ENCODE measurements at regions of chr16 and their contacts with region 1.

Region 1: GRCh38 chr16:57519796-57520360 is 16.5 kb downstream of the CCDC102A start:
- DNase-seq: peak; percentile 59
- H3K4me3 ChIP-seq: no peak overlapping the region
- H3K27ac ChIP-seq: no peak overlapping the region
- H3K4me1 ChIP-seq: peaks cover 3% of the 10 kb centered on the region
- H3K27me3 ChIP-seq: no peaks in the 10 kb centered on the region
- CTCF ChIP-seq: peak; percentile 97 to 98
- POLR2A ChIP-seq: no peak

Region 2: GRCh38 chr16:57422026-57422944 is 97.6 kb before region 1 on chr16:
- CTCF ChIA-PET with region 1: interaction called, 77 read pairs
- POLR2A ChIA-PET with region 1: no interaction called
- dilution Hi-C with region 1: no loop called
- intact Hi-C with region 1: loop called (anchors 1 kb)
- DNase-seq: peak; percentile 67
- H3K4me3 ChIP-seq: no peak overlapping the region
- H3K27ac ChIP-seq: no peak overlapping the region
- H3K4me1 ChIP-seq: peaks cover 5% of the 10 kb centered on the region
- H3K27me3 ChIP-seq: no peaks in the 10 kb centered on the region
- CTCF ChIP-seq: peak; percentile 68 to 72
- POLR2A ChIP-seq: no peak

Region 3: GRCh38 chr16:57462209-57462977 is 57.5 kb before region 1 on chr16 and contains the start of gene POLR2C:
- CTCF ChIA-PET with region 1: interaction called, 40 read pairs
- POLR2A ChIA-PET with region 1: no interaction called
- dilution Hi-C with region 1: no loop called
- intact Hi-C with region 1: loop called (anchors 1 kb)
- DNase-seq: peak; percentile 87
- H3K4me3 ChIP-seq: peak within 1 kb of the TSS; percentile 59 to 85 (median 79)
- H3K27ac ChIP-seq: peak within 1 kb of the TSS; percentile 38
- H3K4me1 ChIP-seq: peaks cover 6% of the 10 kb centered on the region
- H3K27me3 ChIP-seq: no peaks in the 10 kb centered on the region
- CTCF ChIP-seq: peak; percentile 95 to 96
- POLR2A ChIP-seq: peak; percentile 99
- total RNA-seq, gene POLR2C: 60.2 and 65.2 TPM in 2 replicates

Region 4: GRCh38 chr16:57475711-57476339 is 44.1 kb before region 1 on chr16:
- CTCF ChIA-PET with region 1: interaction called, 24 read pairs
- POLR2A ChIA-PET with region 1: no interaction called
- dilution Hi-C with region 1: no loop called
- intact Hi-C with region 1: loop called (anchors 1 kb)
- DNase-seq: peak; percentile 56
- H3K4me3 ChIP-seq: no peak overlapping the region
- H3K27ac ChIP-seq: no peak overlapping the region
- H3K4me1 ChIP-seq: peaks cover 28% of the 10 kb centered on the region
- H3K27me3 ChIP-seq: no peaks in the 10 kb centered on the region
- CTCF ChIP-seq: peak; percentile 79 to 84
- POLR2A ChIP-seq: no peak

Region 5: GRCh38 chr16:57507136-57508034 is 12.5 kb before region 1 on chr16:
- CTCF ChIA-PET with region 1: interaction called, 13 read pairs
- POLR2A ChIA-PET with region 1: no interaction called
- dilution Hi-C with region 1: no loop called
- intact Hi-C with region 1: no loop called
- DNase-seq: no peak
- H3K4me3 ChIP-seq: no peak overlapping the region
- H3K27ac ChIP-seq: no peak overlapping the region
- H3K4me1 ChIP-seq: no peaks in the 10 kb centered on the region
- H3K27me3 ChIP-seq: peaks cover 0 to 6% of the 10 kb centered on the region in 2 experiments
- CTCF ChIP-seq: no peak
- POLR2A ChIP-seq: no peak

Region 6: DNA sequence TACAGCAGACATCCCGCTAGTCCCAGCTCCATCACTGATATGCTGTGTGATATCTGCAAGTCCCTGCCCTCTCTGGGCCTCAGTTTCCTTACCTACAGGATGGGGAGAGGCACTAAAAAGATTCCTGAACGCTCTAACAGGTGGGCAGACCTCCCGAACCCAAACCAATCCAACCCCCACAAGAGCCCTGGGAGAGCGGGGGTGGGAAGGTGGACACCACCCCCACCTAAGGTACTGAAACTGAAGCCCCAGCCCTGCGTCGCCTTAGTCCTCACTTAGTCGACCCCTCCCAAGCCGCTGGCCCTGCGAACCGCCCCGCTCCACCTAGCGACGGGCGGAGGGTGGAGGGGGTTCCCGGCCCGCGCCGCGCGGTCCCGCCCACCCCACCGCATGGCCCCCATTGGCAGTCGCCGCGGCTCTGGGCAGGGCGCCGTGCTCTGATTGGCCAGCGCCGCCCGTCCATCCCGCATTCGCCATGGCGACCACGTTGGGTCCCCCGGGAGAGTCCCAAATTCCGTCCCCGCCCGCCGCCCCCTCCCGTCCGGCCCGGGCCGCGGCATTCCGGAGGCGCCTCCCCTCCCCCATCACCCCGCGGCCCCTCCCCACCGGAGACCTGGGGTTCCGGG is 15.9 kb after region 1 on chr16:
- CTCF ChIA-PET with region 1: interaction called, 10 read pairs
- POLR2A ChIA-PET with region 1: no interaction called
- dilution Hi-C with region 1: no loop called
- intact Hi-C with region 1: loop called (anchors 1 kb)
- DNase-seq: peak; percentile 87
- H3K4me3 ChIP-seq: peak overlapping the region; percentile 80 to 82 (median 80)
- H3K27ac ChIP-seq: peak overlapping the region; percentile 18
- H3K4me1 ChIP-seq: peaks cover 25% of the 10 kb centered on the region
- H3K27me3 ChIP-seq: peaks cover 3 to 24% of the 10 kb centered on the region in 2 experiments
- CTCF ChIP-seq: peak in 1 of 2 donors; percentile 16
- POLR2A ChIP-seq: no peak

Region 7: DNA sequence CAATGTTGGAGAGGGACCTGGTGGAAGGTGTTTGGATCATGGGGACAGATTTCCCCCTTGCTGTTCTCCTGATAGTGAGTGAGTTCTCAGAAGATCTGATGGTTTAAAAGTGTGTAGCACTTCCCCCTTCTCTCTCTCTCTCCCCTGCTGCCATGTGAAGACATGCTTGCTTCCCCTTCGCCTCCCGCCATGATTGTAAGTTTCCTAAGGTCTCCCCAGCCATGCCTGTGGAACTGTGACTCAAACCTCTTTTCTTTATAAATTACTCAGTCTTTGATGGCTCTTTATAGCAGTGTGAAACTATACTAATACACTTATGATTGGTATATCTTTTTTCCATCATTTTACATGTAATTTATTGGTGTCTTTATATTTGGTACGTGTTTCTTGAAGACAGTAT is 36.0 kb after region 1 on chr16:
- CTCF ChIA-PET with region 1: no interaction called
- POLR2A ChIA-PET with region 1: no interaction called
- dilution Hi-C with region 1: no loop called
- intact Hi-C with region 1: no loop called
- DNase-seq: no peak
- H3K4me3 ChIP-seq: no peak overlapping the region
- H3K27ac ChIP-seq: no peak overlapping the region
- H3K4me1 ChIP-seq: no peaks in the 10 kb centered on the region
- H3K27me3 ChIP-seq: peaks cover 14 to 37% of the 10 kb centered on the region in 2 experiments
- CTCF ChIP-seq: no peak
- POLR2A ChIP-seq: no peak

Measured in endothelial cell of umbilical vein (primary cell).